ENCODE measurements at regions of chr9 and their contacts with region 1.

Region 1: GRCh38 chr9:6757456-6758247 is at the start of gene KDM4C:
- DNase-seq: peak; percentile 96
- H3K4me3 Mint-ChIP-seq: peak within 1 kb of the TSS; percentile 94
- H3K27ac Mint-ChIP-seq: peak within 1 kb of the TSS; percentile 98
- H3K4me1 Mint-ChIP-seq: peaks cover 32% of the 10 kb centered on the region
- H3K27me3 Mint-ChIP-seq: no peaks in the 10 kb centered on the region
- total RNA-seq, gene KDM4C: 26.2 to 28.8 TPM

Region 2: DNA sequence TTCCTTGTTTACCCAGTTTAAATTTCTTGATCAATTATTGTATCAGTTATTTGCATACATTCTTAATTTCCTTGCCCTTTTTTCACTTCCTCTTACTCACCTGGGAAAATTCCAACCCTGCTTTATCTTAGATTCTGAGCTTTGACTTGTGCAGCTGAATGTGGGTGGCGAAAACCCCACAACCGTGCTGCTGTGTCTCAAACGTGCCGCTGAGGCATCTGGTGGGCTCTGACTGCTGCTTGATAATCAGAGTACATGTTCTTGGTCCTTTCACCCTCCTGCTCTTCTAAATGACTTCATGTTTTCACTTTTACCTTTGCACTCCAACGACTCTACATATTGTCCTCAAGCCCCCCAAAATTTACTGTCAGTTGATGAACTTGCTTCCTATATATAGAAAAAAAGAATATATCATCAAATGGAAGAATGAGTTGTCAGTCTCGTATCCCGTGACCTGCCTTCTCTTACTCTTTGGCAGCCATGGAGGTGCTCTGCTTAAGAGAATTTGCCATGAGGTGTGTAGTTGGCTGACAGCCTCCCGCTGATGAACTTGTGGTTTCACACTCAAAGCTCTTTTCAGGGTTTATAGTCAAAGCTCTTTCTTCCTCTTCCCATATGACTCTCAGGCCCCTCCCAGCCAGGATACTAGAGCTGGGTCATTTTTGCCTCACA is 1786.5 kb before region 1 on chr9:
- CTCF ChIA-PET with region 1: no interaction called
- POLR2A ChIA-PET with region 1: no interaction called
- intact Hi-C with region 1: loop called (anchors 5 kb)
- DNase-seq: peak; percentile 86
- H3K4me3 Mint-ChIP-seq: no peak overlapping the region
- H3K27ac Mint-ChIP-seq: no peak overlapping the region
- H3K4me1 Mint-ChIP-seq: peaks cover 26% of the 10 kb centered on the region
- H3K27me3 Mint-ChIP-seq: no peaks in the 10 kb centered on the region

Region 3: GRCh38 chr9:6598249-6598725 is 159.4 kb before region 1 on chr9:
- CTCF ChIA-PET with region 1: no interaction called
- POLR2A ChIA-PET with region 1: interaction called, 5 read pairs
- intact Hi-C with region 1: loop called (anchors 1 kb)
- DNase-seq: peak; percentile 74
- H3K4me3 Mint-ChIP-seq: peak overlapping the region; percentile 47
- H3K27ac Mint-ChIP-seq: peak overlapping the region; percentile 87
- H3K4me1 Mint-ChIP-seq: peaks cover 8% of the 10 kb centered on the region
- H3K27me3 Mint-ChIP-seq: peaks cover 1% of the 10 kb centered on the region

Region 4: DNA sequence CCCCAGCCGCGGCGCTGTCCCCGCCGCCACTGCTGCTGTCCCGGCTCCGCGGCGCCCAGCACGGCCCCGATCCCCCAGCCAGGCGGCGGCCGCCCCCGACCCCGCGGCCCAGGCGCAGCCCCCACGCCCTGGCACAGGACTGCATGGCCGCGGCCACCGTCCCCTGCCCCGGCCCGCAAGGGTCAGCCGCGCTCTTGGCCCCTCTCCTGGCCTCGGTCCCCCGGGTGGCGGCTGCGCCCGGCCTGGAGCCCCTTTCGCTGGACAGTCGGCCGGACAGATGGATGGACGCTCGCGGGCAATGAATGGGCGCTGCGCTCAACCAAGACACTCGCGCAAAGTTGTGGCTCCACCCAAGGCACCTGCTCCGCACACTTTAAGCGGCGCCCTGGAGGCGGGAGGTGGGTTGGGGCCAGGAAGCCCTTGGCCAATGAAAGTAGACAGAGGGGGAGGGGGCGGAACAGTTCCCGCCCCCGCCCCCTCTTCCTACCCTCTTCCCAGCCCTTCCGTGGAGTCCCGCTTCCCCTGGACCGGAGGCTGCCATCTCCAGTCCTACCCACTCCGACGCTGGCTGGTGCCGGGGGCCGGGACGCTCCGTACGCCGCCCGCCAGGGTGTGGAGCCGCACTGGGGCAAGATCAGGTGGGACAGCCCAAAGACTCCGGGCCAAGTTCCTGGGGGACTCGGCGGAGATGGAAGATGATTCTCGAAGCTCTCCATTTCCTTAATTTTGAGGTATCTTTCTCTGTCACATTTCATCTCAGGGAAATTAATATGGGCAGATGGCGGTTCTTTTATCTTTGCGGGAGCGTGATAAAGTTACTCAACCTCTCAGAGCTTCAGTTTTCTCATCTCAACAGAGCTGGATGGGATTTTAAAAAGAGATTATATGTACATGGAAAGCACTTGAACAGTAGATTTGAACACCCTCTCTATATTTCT is 112.0 kb before region 1 on chr9 and contains the start of gene GLDC:
- CTCF ChIA-PET with region 1: no interaction called
- POLR2A ChIA-PET with region 1: no interaction called
- intact Hi-C with region 1: loop called (anchors 1 kb)
- DNase-seq: peak; percentile 62
- H3K4me3 Mint-ChIP-seq: peak within 1 kb of the TSS; percentile 79
- H3K27ac Mint-ChIP-seq: no peak within 1 kb of the TSS
- H3K4me1 Mint-ChIP-seq: peaks cover 17% of the 10 kb centered on the region
- H3K27me3 Mint-ChIP-seq: peaks cover 38% of the 10 kb centered on the region
- total RNA-seq, gene GLDC: 7.1 to 9.9 TPM

Region 5: DNA sequence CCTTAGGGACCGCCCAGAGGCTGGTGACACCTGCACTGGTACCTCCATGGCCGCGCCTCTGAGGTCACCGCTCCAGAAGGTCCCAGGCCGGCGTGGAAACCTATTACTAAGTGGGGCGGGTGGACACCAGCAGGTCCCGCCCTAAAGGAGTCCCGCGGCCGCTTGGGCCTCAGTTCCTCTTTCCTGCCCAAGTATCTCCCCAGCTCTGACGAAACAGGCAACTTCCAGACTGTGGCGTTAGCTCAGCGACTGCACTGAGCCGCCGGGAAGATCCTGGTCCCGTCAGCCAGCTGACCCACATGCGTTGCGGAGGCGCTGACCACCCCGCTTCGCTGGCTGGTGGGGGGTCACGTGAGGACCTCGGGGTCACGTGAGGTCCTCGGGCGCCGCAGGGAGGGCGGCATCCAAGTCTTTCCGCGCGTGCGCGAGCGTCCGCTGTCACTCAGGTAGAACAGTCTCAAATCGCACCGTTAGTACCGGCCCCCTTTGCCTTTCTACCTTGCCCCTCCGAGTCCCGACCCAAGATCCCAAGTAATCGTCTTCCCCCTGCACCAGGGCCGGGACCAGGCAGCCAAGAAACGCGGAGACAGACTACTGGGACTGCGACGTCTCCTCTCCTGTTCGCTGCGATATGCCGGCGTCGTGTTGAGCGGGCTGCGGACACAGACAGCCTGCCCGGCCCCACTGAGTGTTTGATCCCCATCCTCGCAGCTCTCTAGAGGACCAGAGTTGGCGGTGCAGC is 53.6 kb before region 1 on chr9:
- CTCF ChIA-PET with region 1: no interaction called
- POLR2A ChIA-PET with region 1: interaction called, 12 read pairs
- intact Hi-C with region 1: loop called (anchors 1 kb)
- DNase-seq: peak; percentile 82
- H3K4me3 Mint-ChIP-seq: peak overlapping the region; percentile 82
- H3K27ac Mint-ChIP-seq: peak overlapping the region; percentile 75
- H3K4me1 Mint-ChIP-seq: peaks cover 9% of the 10 kb centered on the region
- H3K27me3 Mint-ChIP-seq: no peaks in the 10 kb centered on the region

Region 6: GRCh38 chr9:6715755-6716643 is 41.7 kb before region 1 on chr9:
- CTCF ChIA-PET with region 1: no interaction called
- POLR2A ChIA-PET with region 1: interaction called, 25 read pairs
- intact Hi-C with region 1: loop called (anchors 1 kb)
- DNase-seq: peak; percentile 84
- H3K4me3 Mint-ChIP-seq: peak overlapping the region; percentile 84
- H3K27ac Mint-ChIP-seq: peak overlapping the region; percentile 91
- H3K4me1 Mint-ChIP-seq: peaks cover 5% of the 10 kb centered on the region
- H3K27me3 Mint-ChIP-seq: no peaks in the 10 kb centered on the region

Region 7: DNA sequence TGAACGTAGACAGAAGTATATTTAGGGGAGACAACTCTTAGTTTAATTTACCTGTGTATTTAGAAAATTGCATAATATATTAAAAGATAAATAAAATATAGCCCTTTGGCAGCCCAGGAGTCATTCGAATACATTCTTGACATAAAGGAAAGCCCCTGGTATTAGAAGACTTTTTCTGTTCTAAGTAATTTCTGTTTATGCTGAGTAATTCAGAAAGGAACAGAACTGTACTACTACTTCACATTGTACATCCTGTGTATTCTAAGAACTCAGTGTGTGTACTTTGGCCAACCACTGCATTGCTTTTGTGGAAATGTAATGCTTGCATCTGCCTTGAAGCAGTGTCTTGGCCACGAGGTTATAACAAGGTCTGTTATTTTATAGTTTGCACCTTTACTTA is 136.5 kb after region 1 on chr9:
- CTCF ChIA-PET with region 1: no interaction called
- POLR2A ChIA-PET with region 1: no interaction called
- intact Hi-C with region 1: loop called (anchors 1 kb)
- DNase-seq: peak; percentile 25
- H3K4me3 Mint-ChIP-seq: no peak overlapping the region
- H3K27ac Mint-ChIP-seq: no peak overlapping the region
- H3K4me1 Mint-ChIP-seq: peaks cover 48% of the 10 kb centered on the region
- H3K27me3 Mint-ChIP-seq: no peaks in the 10 kb centered on the region

Measured in activated CD4-positive, alpha-beta memory T cell treated with anti-CD3 and anti-CD28 coated beads for 36 hours (primary cell).